ENCODE measurements at regions of chr9 and their contacts with region 1.

Region 1: GRCh38 chr9:132669698-132670456 is at the start of gene DDX31:
- DNase-seq: peak; percentile 90 to 93
- ATAC-seq: peak; percentile 77 to 92 (median 81)
- H3K4me3 ChIP-seq: peak within 1 kb of the TSS; percentile 74
- H3K4me3 Mint-ChIP-seq: peak within 1 kb of the TSS; percentile 92
- H3K27ac ChIP-seq: peak within 1 kb of the TSS; percentile 88
- H3K27ac Mint-ChIP-seq: peak within 1 kb of the TSS; percentile 91
- H3K4me1 ChIP-seq: peaks cover 15% of the 10 kb centered on the region
- H3K4me1 Mint-ChIP-seq: peaks cover 40 to 46% of the 10 kb centered on the region in 2 donors
- H3K27me3 ChIP-seq: no peaks in the 10 kb centered on the region
- H3K27me3 Mint-ChIP-seq: no peaks in the 10 kb centered on the region
- CTCF ChIP-seq: no peak
- total RNA-seq, gene DDX31: 6.5 to 12.2 (median 11.5) TPM

Region 2: GRCh38 chr9:132622159-132622558 is 47.7 kb before region 1 on chr9:
- intact Hi-C with region 1: no loop called
- DNase-seq: no peak
- ATAC-seq: no peak
- H3K4me3 ChIP-seq: no peak overlapping the region
- H3K4me3 Mint-ChIP-seq: no peak overlapping the region
- H3K27ac ChIP-seq: no peak overlapping the region
- H3K27ac Mint-ChIP-seq: no peak overlapping the region
- H3K4me1 ChIP-seq: no peaks in the 10 kb centered on the region
- H3K4me1 Mint-ChIP-seq: peaks cover 1 to 2% of the 10 kb centered on the region in 2 donors
- H3K27me3 ChIP-seq: no peaks in the 10 kb centered on the region
- H3K27me3 Mint-ChIP-seq: no peaks in the 10 kb centered on the region
- CTCF ChIP-seq: no peak

Region 3: GRCh38 chr9:132632413-132633129 is 37.3 kb before region 1 on chr9:
- intact Hi-C with region 1: no loop called
- DNase-seq: no peak
- ATAC-seq: no peak
- H3K4me3 ChIP-seq: no peak overlapping the region
- H3K4me3 Mint-ChIP-seq: no peak overlapping the region
- H3K27ac ChIP-seq: no peak overlapping the region
- H3K27ac Mint-ChIP-seq: no peak overlapping the region
- H3K4me1 ChIP-seq: no peaks in the 10 kb centered on the region
- H3K4me1 Mint-ChIP-seq: peaks cover 4 to 5% of the 10 kb centered on the region in 2 donors
- H3K27me3 ChIP-seq: no peaks in the 10 kb centered on the region
- H3K27me3 Mint-ChIP-seq: no peaks in the 10 kb centered on the region
- CTCF ChIP-seq: no peak

Region 4: DNA sequence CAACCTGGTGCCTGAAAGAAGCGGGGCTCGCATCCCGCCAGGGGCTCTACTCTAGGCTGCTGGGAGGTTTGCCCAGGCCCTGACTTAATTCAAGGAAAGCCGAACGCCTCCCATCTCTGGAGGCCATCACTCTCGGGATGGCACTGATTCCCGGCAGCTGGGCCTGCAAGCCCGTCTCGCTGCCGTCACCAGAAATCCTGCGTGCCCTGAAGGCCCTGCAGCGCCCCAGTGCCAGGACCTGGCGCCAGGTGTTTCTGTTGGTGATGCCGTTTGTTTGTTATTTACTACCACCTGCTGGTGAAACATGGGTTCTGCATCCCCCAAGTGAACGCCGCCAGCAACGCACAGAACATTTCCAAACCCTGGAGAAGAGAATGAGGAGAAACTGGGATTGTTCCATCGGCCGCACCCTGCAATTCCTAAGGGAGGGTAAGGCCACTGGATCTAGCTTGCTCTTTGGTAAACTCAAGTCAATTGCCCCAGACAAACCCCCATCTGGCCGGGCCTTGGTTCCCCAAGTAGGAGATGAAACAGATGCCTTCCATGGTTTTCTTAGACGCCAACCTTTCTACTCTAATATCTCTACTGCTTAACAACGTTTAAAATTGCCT is 130.3 kb after region 1 on chr9:
- intact Hi-C with region 1: loop called (anchors 5 kb)
- DNase-seq: peak; percentile 42 to 84
- ATAC-seq: peak; percentile 72 to 86 (median 83)
- H3K4me3 ChIP-seq: no peak overlapping the region
- H3K4me3 Mint-ChIP-seq: no peak overlapping the region
- H3K27ac ChIP-seq: no peak overlapping the region
- H3K27ac Mint-ChIP-seq: no peak overlapping the region
- H3K4me1 ChIP-seq: peaks cover 25% of the 10 kb centered on the region
- H3K4me1 Mint-ChIP-seq: peaks cover 25 to 43% of the 10 kb centered on the region in 2 donors
- H3K27me3 ChIP-seq: no peaks in the 10 kb centered on the region
- H3K27me3 Mint-ChIP-seq: peaks cover 0 to 16% of the 10 kb centered on the region in 2 donors
- CTCF ChIP-seq: peak; percentile 85

Region 5: DNA sequence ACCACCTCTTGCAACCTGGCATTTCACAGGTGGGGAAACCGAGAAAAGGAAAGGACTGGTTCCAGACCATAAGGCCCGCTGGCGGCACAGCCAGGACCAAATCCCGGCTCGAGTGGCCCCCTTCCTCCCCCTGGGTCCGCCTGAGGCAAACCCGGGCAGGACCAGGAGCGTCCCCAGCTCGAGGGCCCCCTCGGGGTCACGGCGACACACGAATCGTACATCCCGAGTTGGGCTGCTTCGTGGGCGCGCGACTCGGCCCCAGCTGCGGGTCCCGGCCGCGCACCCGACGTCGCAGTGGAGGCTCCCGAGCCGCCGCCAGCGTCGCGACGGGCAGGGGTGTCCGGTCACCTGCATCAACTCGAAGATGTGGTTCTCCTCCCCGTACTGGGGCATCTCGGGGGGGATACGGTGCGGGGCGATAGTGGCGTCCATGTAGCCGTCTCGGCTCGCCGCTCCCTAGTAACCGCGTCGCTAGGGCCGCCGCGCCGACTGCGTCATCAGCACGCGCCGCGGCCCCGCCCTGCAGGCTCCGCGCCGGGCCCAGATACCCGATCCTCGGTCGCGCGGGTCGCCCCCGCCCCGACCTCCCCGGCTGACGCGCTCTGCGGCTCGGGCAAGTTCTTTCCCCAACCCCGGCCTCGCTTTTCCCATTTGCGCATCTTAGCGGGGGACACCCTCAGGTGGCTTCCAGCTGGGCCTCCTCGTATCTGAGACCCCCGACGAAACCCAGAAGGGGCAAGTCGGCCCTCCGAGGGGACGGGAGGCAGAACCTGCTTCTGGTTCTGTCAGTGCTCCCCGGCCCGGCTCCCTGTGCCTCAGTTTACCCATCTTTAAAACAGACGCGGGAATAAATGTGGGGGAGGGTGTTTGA is 208.2 kb after region 1 on chr9 and contains the start of gene AK8:
- intact Hi-C with region 1: loop called (anchors 1 kb)
- DNase-seq: peak; percentile 82 to 89
- ATAC-seq: peak; percentile 81 to 90 (median 89)
- H3K4me3 ChIP-seq: peak within 1 kb of the TSS; percentile 78
- H3K4me3 Mint-ChIP-seq: peak within 1 kb of the TSS; percentile 86
- H3K27ac ChIP-seq: peak within 1 kb of the TSS; percentile 56
- H3K27ac Mint-ChIP-seq: peak within 1 kb of the TSS; percentile 74 to 84
- H3K4me1 ChIP-seq: peaks cover 45% of the 10 kb centered on the region
- H3K4me1 Mint-ChIP-seq: peaks cover 21 to 29% of the 10 kb centered on the region in 2 donors
- H3K27me3 ChIP-seq: no peaks in the 10 kb centered on the region
- H3K27me3 Mint-ChIP-seq: peaks cover 0 to 6% of the 10 kb centered on the region in 2 donors
- CTCF ChIP-seq: no peak
- total RNA-seq, gene AK8: 0.14 to 0.21 (median 0.18) TPM

Region 6: DNA sequence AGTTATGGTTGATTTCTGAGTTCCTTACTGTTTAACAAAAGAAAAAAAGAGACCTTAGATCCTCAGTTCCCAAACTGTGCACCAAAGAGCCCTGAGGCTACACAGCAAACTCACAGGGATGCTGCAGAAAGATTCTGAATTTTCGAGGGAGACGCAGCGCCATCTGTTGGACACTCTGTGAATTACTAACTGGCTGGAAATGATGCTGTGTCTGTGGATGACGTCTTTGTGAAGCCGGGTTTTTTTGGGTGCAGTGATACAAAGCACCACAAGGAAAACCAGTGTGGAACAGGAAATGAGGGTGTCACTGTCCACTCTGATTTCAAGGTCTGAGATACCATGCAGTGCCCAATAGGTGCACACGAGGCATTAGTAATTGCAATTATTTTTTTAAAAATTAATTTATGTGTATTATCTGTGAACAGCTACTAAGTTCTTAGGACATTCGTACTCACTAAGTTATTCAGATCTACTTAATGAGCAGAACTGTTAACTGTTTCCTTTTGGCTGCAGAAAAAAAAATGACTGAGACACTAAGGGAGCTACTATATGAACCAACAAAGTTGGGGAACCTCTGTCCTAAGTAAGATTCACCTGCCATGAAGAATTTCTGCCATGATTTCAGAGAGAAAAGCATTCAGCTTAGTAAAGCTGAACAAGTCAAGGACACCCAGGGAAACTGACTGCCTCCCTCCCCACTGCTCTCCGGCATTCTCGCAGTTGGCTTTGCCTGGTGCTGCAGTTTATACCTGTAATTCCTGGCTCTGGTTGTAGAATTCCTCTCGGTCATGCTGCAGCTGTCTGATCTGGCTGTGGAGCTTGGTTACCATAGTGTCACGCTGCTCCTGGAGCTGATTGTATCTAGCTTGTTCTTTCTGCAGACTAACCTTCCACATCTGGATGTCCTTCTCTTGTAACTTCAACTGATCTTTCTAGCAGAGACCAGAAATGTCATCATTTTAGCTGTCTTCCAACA is 232.3 kb after region 1 on chr9:
- intact Hi-C with region 1: loop called (anchors 10 kb)
- DNase-seq: peak; percentile 75 to 92
- ATAC-seq: peak; percentile 95 to 99 (median 99)
- H3K4me3 ChIP-seq: no peak overlapping the region
- H3K4me3 Mint-ChIP-seq: no peak overlapping the region
- H3K27ac ChIP-seq: no peak overlapping the region
- H3K27ac Mint-ChIP-seq: peak overlapping the region; percentile 10 to 75
- H3K4me1 ChIP-seq: peaks cover 8% of the 10 kb centered on the region
- H3K4me1 Mint-ChIP-seq: peaks cover 0 to 6% of the 10 kb centered on the region in 2 donors
- H3K27me3 ChIP-seq: no peaks in the 10 kb centered on the region
- H3K27me3 Mint-ChIP-seq: no peaks in the 10 kb centered on the region
- CTCF ChIP-seq: peak; percentile 94